ENCODE measurements at regions of chr19 and their contacts with region 1.

Region 1: GRCh38 chr19:33373701-33374421 is at the start of gene CEBPG:
- H3K4me3 Mint-ChIP-seq: peak within 1 kb of the TSS; percentile 87
- H3K27ac Mint-ChIP-seq: peak within 1 kb of the TSS; percentile 95
- H3K4me1 Mint-ChIP-seq: peaks cover 56% of the 10 kb centered on the region
- H3K27me3 Mint-ChIP-seq: no peaks in the 10 kb centered on the region

Region 2: DNA sequence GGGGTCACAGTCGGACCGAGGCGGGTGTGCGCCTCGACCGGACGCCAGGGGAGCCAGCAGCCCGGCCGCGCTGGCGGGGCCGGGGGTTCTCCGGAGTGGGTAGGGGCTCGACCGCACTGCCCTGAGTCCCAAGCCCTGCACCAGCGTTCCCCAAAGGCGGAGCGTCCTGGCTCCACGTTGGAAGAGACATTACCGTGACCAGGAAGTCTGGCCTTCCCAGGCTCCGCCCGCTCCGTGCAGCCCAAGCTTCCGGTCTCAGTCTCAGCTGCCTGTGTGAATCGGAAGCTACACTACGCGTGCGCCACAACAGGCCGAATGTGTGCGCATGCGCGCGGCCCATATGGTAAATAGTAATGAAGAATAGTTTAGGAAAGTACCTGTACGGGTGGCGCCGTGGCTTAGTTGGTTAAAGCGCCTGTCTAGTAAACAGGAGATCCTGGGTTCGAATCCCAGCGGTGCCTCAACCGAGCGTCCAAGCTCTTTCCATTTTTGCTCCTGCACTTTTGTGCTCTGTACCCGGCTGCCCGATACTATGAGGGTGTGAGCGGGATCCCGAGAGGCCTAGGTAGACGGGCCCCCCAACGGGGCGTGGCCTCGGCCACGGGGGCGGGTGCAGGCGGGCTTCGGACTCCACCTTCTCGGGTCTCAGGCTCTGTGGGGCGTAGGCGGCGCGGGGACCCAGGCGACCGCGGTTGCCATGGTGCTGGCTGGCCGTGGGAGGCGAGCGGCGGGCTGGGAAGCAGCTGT is 197.0 kb before region 1 on chr19:
- intact Hi-C with region 1: loop called (anchors 2 kb)
- H3K4me3 Mint-ChIP-seq: peak overlapping the region; percentile 93
- H3K27ac Mint-ChIP-seq: peak overlapping the region; percentile 92
- H3K4me1 Mint-ChIP-seq: peaks cover 54% of the 10 kb centered on the region
- H3K27me3 Mint-ChIP-seq: no peaks in the 10 kb centered on the region

Region 3: DNA sequence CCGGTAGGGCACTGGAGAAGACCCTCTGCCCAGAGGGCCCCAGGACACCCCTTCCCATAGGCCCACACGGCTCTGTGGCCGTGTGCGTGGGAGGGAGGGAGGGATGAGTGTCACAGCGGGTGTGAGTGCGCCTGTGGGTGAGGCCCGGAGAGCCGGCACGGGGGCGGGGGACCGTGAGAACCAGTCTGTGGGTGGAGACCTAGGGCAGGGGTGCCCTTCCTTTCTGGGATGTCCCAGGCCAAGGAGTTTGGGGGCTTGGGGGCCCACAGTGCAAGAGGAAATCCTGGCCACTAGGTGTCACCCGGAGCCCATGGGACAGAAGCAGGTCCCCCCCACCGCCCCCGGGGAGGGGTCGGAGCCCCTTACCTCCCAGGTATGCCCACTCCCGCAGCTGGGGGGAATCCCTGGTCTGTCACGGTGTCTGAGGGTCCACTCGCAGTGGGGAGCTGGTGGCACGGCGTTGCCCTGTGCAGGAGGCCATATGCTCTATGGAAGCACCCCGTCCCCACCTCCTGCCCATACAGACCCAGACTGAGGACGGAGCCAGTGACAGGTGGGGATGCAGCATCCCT is 132.2 kb before region 1 on chr19:
- intact Hi-C with region 1: loop called (anchors 10 kb)
- H3K4me3 Mint-ChIP-seq: no peak overlapping the region
- H3K27ac Mint-ChIP-seq: peak overlapping the region; percentile 31
- H3K4me1 Mint-ChIP-seq: peaks cover 44% of the 10 kb centered on the region
- H3K27me3 Mint-ChIP-seq: peaks cover 4% of the 10 kb centered on the region

Region 4: GRCh38 chr19:33332248-33332647 is 41.6 kb before region 1 on chr19:
- intact Hi-C with region 1: loop called (anchors 2 kb)
- H3K4me3 Mint-ChIP-seq: no peak overlapping the region
- H3K27ac Mint-ChIP-seq: peak overlapping the region; percentile 90
- H3K4me1 Mint-ChIP-seq: peaks cover 50% of the 10 kb centered on the region
- H3K27me3 Mint-ChIP-seq: no peaks in the 10 kb centered on the region